OCI-LY7 (cell line): ENCODE measurements at regions of chr3 and their contacts with region 1.

Region 1: GRCh38 chr3:52561028-52561747 is 24.8 kb downstream of the UQCC5 start:
- DNase-seq: no peak
- H3K4me3 ChIP-seq: no peak overlapping the region
- H3K27ac ChIP-seq: no peak overlapping the region
- H3K4me1 ChIP-seq: no peaks in the 10 kb centered on the region
- CTCF ChIP-seq: no peak

Region 2: GRCh38 chr3:52515192-52515591 is 46.0 kb before region 1 on chr3:
- CTCF ChIA-PET with region 1: no interaction called
- POLR2A ChIA-PET with region 1: interaction called, 3 read pairs
- intact Hi-C with region 1: loop called (anchors 1 kb)
- DNase-seq: no peak
- H3K4me3 ChIP-seq: no peak overlapping the region
- H3K27ac ChIP-seq: no peak overlapping the region
- H3K4me1 ChIP-seq: no peaks in the 10 kb centered on the region
- CTCF ChIP-seq: no peak

Region 3: GRCh38 chr3:52551118-52551517 is 10.1 kb before region 1 on chr3:
- CTCF ChIA-PET with region 1: no interaction called
- POLR2A ChIA-PET with region 1: no interaction called
- intact Hi-C with region 1: no loop called
- DNase-seq: no peak
- H3K4me3 ChIP-seq: no peak overlapping the region
- H3K27ac ChIP-seq: no peak overlapping the region
- H3K4me1 ChIP-seq: no peaks in the 10 kb centered on the region
- CTCF ChIP-seq: no peak